ENCODE measurements at regions of chr1 and their contacts with region 1.

Region 1: GRCh38 chr1:200290010-200290685 is 119.7 kb downstream of the ZNF281 start:
- DNase-seq: peak; percentile 53
- H3K4me3 ChIP-seq: no peak overlapping the region
- H3K27ac ChIP-seq: no peak overlapping the region
- H3K4me1 ChIP-seq: peaks cover 57% of the 10 kb centered on the region
- CTCF ChIP-seq: peak; percentile 61

Region 2: GRCh38 chr1:199725002-199725565 is 565.1 kb before region 1 on chr1:
- CTCF ChIA-PET with region 1: no interaction called
- POLR2A ChIA-PET with region 1: no interaction called
- intact Hi-C with region 1: no loop called
- DNase-seq: no peak
- H3K4me3 ChIP-seq: no peak overlapping the region
- H3K27ac ChIP-seq: no peak overlapping the region
- H3K4me1 ChIP-seq: no peaks in the 10 kb centered on the region
- CTCF ChIP-seq: no peak

Region 3: GRCh38 chr1:199976496-199977144 is 313.5 kb before region 1 on chr1:
- CTCF ChIA-PET with region 1: no interaction called
- POLR2A ChIA-PET with region 1: no interaction called
- intact Hi-C with region 1: loop called (anchors 1 kb)
- DNase-seq: peak; percentile 18
- H3K4me3 ChIP-seq: peak overlapping the region; percentile 31
- H3K27ac ChIP-seq: peak overlapping the region; percentile 98
- H3K4me1 ChIP-seq: peaks cover 60% of the 10 kb centered on the region
- CTCF ChIP-seq: no peak

Region 4: GRCh38 chr1:200154069-200154767 is 135.9 kb before region 1 on chr1:
- CTCF ChIA-PET with region 1: no interaction called
- POLR2A ChIA-PET with region 1: interaction called, 3 read pairs
- intact Hi-C with region 1: loop called (anchors 5 kb)
- DNase-seq: peak; percentile 93
- H3K4me3 ChIP-seq: peak overlapping the region; percentile 41
- H3K27ac ChIP-seq: peak overlapping the region; percentile 89
- H3K4me1 ChIP-seq: peaks cover 56% of the 10 kb centered on the region
- CTCF ChIP-seq: no peak

Region 5: GRCh38 chr1:200242110-200243041 is 47.8 kb before region 1 on chr1:
- CTCF ChIA-PET with region 1: no interaction called
- POLR2A ChIA-PET with region 1: no interaction called
- intact Hi-C with region 1: no loop called
- DNase-seq: no peak
- H3K4me3 ChIP-seq: no peak overlapping the region
- H3K27ac ChIP-seq: no peak overlapping the region
- H3K4me1 ChIP-seq: no peaks in the 10 kb centered on the region
- CTCF ChIP-seq: no peak

Region 6: GRCh38 chr1:200265051-200265450 is 25.1 kb before region 1 on chr1:
- CTCF ChIA-PET with region 1: no interaction called
- POLR2A ChIA-PET with region 1: no interaction called
- intact Hi-C with region 1: no loop called
- DNase-seq: no peak
- H3K4me3 ChIP-seq: no peak overlapping the region
- H3K27ac ChIP-seq: no peak overlapping the region
- H3K4me1 ChIP-seq: no peaks in the 10 kb centered on the region
- CTCF ChIP-seq: no peak

Region 7: DNA sequence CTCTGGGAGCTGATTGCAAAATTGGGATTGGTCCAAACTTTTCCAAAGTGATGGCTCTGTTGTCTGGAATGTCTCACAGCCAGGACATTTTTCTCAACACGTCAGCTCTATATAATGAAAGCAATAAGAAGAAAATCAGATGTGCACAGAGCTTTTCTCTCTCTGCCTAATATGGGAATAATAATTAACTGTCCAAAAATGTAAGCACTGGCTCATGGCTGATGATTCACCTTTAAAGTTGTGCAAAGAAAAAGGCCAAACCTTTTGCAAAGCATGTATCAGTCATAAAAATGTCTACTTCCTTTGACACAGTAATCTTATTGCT is 89.2 kb after region 1 on chr1:
- CTCF ChIA-PET with region 1: no interaction called
- POLR2A ChIA-PET with region 1: interaction called, 3 read pairs
- intact Hi-C with region 1: loop called (anchors 2 kb)
- DNase-seq: no peak
- H3K4me3 ChIP-seq: peak overlapping the region; percentile 53
- H3K27ac ChIP-seq: peak overlapping the region; percentile 83
- H3K4me1 ChIP-seq: peaks cover 76% of the 10 kb centered on the region
- CTCF ChIP-seq: no peak

Region 8: GRCh38 chr1:200409761-200410565 is 119.8 kb after region 1 on chr1 and contains the start of gene ZNF281:
- CTCF ChIA-PET with region 1: no interaction called
- POLR2A ChIA-PET with region 1: interaction called, 4 read pairs
- intact Hi-C with region 1: loop called (anchors 1 kb)
- DNase-seq: peak; percentile 96
- H3K4me3 ChIP-seq: peak within 1 kb of the TSS; percentile 97
- H3K27ac ChIP-seq: peak within 1 kb of the TSS; percentile 79
- H3K4me1 ChIP-seq: peaks cover 50% of the 10 kb centered on the region
- CTCF ChIP-seq: no peak
- total RNA-seq, gene ZNF281: 22.9 and 24.2 TPM in 2 replicates